Endothelial cell of umbilical vein (primary cell): ENCODE measurements at regions of chr5 and their contacts with region 1.

Region 1: DNA sequence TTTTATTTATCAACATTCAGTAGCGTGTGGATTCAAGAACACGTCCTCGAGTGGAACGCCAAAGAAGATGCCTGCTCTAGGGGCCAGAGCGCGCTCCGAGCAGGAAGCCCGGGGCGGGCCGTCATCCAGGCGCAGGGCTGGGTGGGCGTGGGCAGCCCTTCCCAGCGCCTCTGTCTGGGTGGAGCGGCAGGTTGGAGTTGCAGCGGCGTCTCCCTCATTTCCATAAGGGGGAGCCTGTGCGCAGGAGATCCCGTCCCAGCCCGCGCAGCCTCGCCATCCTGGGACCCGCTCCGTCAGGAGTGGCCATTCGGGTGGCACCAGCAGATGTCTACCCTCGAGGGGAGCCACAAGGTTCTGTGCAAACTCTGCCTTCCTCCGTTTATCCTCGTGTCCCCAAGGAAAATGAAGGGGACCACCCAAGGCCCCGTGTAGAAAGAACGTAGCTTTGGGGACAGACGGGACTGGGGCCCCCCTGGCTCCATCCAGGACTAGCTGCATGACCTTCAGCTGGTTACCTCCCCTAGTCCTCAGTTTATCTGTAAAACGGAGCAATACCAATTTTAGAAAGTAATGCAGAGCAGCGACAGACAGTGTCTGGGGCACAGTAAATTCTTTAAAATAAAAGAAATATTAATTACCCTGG is 155.5 kb upstream of the SMIM23 start:
- DNase-seq: peak; percentile 61
- H3K4me3 ChIP-seq: peak overlapping the region in 2 of 3 experiments; percentile 14 to 36
- H3K27ac ChIP-seq: no peak overlapping the region
- H3K4me1 ChIP-seq: peaks cover 9% of the 10 kb centered on the region
- H3K27me3 ChIP-seq: peaks cover 4 to 20% of the 10 kb centered on the region in 2 experiments
- CTCF ChIP-seq: peak; percentile 55 to 74
- POLR2A ChIP-seq: no peak

Region 2: GRCh38 chr5:171484460-171484899 is 145.7 kb before region 1 on chr5:
- CTCF ChIA-PET with region 1: interaction called, 14 read pairs
- POLR2A ChIA-PET with region 1: no interaction called
- dilution Hi-C with region 1: no loop called
- intact Hi-C with region 1: loop called (anchors 1 kb)
- DNase-seq: peak; percentile 33
- H3K4me3 ChIP-seq: no peak overlapping the region
- H3K27ac ChIP-seq: no peak overlapping the region
- H3K4me1 ChIP-seq: no peaks in the 10 kb centered on the region
- H3K27me3 ChIP-seq: peaks cover 0 to 2% of the 10 kb centered on the region in 2 experiments
- CTCF ChIP-seq: peak; percentile 71 to 83
- POLR2A ChIP-seq: no peak

Region 3: GRCh38 chr5:171562822-171563221 is 67.3 kb before region 1 on chr5:
- CTCF ChIA-PET with region 1: no interaction called
- POLR2A ChIA-PET with region 1: no interaction called
- dilution Hi-C with region 1: no loop called
- intact Hi-C with region 1: no loop called
- DNase-seq: peak; percentile 14
- H3K4me3 ChIP-seq: no peak overlapping the region
- H3K27ac ChIP-seq: no peak overlapping the region
- H3K4me1 ChIP-seq: no peaks in the 10 kb centered on the region
- H3K27me3 ChIP-seq: peaks cover 4 to 9% of the 10 kb centered on the region in 2 experiments
- CTCF ChIP-seq: no peak
- POLR2A ChIP-seq: no peak

Region 4: DNA sequence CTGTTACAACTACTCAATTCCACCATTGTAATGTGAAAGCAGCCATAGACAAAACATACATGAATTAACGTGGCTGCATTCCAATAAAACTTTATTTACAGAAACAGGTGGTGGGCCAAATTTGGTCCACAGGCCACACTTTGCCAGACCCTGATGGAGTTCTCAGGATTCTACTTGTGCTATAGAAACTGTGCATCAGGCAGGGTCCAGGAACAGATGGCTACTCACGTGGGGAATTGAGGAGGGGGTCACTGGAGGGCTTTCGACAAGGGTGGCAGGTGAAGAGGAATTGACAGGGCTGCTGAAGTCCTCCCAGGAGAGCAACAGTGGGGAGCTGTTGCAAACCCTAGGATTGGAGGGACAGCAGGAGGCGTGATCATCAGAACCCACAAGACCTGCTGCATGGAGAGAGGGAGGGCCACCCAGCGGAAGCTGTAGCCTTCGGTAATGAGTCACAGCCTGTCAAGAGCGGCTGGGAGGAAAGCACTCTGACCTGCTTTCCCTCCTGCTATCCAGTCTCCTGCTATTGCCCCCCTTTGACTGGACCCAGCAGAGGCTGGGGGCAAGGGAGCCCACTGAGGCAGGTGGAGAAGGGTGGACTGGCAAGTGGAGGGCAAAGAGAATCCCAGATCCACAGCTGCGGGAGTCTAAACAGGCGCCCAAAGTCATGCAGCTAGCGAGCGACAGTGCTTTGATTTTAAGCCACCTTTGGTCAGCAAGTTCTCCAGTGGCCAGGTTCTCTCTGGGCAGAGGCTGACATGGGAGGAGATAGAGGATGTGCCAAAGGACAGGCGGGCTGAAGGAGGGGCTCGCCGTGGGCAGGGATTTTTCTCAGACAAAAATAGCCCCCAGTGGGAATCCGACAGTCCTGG is 17.1 kb after region 1 on chr5:
- CTCF ChIA-PET with region 1: interaction called, 20 read pairs
- POLR2A ChIA-PET with region 1: no interaction called
- dilution Hi-C with region 1: no loop called
- intact Hi-C with region 1: no loop called
- DNase-seq: peak; percentile 86
- H3K4me3 ChIP-seq: no peak overlapping the region
- H3K27ac ChIP-seq: peak overlapping the region; percentile 30
- H3K4me1 ChIP-seq: peaks cover 13% of the 10 kb centered on the region
- H3K27me3 ChIP-seq: no peaks in the 10 kb centered on the region
- CTCF ChIP-seq: peak in 1 of 2 donors; percentile 15
- POLR2A ChIP-seq: no peak

Region 5: DNA sequence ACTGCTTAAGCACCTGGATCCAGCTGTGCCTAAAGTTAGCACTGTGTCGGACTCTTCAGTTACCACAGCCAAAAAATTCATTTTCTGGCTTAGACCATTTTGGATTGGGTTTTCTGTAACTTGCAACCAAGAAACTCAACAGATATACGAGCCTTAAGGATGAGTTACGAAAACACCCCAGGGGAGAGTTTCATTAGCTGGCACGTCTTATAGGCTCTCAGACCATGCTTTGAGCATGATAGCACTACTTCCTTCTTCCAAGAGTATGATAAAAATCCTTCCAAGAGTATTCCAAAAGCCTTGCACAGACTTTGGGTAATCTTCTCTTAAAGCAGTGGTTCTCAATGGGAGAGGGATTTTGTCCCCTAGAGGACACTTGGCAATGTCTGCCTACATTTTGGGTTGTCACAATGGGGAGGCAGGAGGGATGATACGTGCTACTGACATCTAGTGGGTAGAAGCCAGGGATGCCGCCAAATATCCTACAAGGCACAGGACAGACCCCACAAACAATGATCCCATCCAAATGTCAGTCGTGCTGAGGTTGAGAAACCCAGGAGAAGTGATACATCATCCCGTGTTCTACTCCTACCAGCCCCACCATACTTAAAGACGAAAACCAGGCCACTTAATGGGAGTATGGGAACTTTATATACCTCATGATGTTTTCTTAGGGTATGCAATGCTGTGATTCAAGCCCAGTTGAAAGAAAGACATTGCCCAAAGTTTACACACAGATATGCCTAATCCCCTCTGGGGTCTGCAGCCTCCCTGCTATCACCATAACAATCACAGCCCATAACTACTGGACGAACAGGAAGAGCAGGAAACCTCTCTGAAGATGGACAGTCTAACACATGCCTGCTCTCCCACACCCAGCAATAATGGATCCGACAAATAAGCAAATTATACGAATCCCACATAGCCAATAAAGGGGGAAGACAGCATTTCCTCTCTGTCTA is 220.5 kb after region 1 on chr5:
- CTCF ChIA-PET with region 1: interaction called, 12 read pairs
- POLR2A ChIA-PET with region 1: no interaction called
- dilution Hi-C with region 1: no loop called
- intact Hi-C with region 1: loop called (anchors 2 kb)
- DNase-seq: no peak
- H3K4me3 ChIP-seq: no peak overlapping the region
- H3K27ac ChIP-seq: no peak overlapping the region
- H3K4me1 ChIP-seq: no peaks in the 10 kb centered on the region
- H3K27me3 ChIP-seq: no peaks in the 10 kb centered on the region
- CTCF ChIP-seq: peak in 1 of 2 donors; percentile 28
- POLR2A ChIP-seq: no peak

Region 6: DNA sequence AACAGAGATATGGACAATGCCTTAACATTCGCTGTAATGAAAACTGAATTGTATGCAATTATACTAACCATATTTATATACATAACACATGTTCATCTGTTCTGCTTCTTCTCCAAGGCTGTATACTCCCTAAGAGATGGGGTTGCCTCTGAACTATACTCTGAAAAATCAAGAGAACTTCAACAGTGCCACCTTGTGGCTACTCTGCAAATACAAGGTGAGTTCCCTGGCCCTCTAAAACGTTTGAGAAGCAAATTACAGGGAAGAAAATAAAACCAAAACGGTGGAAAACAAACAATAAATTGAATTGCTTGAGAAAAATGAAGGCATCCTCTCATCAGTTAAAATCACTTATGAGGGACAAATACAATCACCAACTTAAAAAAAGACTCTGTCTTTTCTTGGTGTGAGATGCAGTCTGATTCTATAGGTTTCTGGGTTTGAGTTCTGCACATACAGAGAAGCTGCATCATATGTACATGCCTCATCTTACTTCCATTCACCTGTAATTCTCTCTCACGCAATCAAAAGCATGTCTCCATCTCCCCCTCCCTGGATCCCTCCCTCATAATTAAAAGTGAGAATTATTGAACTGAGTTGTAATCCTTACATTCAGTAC is 277.7 kb after region 1 on chr5:
- CTCF ChIA-PET with region 1: interaction called, 20 read pairs
- POLR2A ChIA-PET with region 1: no interaction called
- dilution Hi-C with region 1: no loop called
- intact Hi-C with region 1: loop called (anchors 1 kb)
- DNase-seq: peak; percentile 65
- H3K4me3 ChIP-seq: no peak overlapping the region
- H3K27ac ChIP-seq: no peak overlapping the region
- H3K4me1 ChIP-seq: no peaks in the 10 kb centered on the region
- H3K27me3 ChIP-seq: no peaks in the 10 kb centered on the region
- CTCF ChIP-seq: peak; percentile 52 to 58
- POLR2A ChIP-seq: no peak